Aorta (tissue), 5 donors: ENCODE measurements at regions of chr2 and their contacts with region 1.

Region 1: GRCh38 chr2:179422037-179422643 is 157.5 kb upstream of the SESTD1 start:
- DNase-seq: peak; percentile 77 to 83
- ATAC-seq: peak; percentile 74
- H3K4me3 ChIP-seq: no peak overlapping the region
- H3K27ac ChIP-seq: no peak overlapping the region
- H3K4me1 ChIP-seq: no peaks in the 10 kb centered on the region
- H3K27me3 ChIP-seq: no peaks in the 10 kb centered on the region

Region 2: DNA sequence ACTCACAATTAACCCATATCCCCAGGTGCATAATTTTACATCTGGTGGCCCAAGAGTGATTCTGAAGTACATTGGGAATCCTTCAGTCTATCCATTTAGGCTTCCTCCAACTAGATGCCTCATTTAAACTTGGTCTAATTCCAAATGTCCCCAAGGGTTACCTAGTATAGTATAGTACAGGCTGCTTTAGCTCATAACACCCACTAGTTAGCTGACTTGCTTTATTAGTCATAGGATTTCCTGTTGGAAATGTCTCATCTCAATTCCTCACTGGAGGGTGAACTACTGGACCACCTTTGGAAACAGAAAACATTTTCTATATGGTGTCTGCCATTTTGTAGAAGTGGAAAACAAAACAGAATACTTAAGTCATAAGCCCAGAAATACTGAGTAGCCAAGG is 45.0 kb after region 1 on chr2:
- intact Hi-C with region 1: no loop called
- DNase-seq: no peak
- ATAC-seq: no peak
- H3K4me3 ChIP-seq: no peak overlapping the region
- H3K27ac ChIP-seq: no peak overlapping the region
- H3K4me1 ChIP-seq: no peaks in the 10 kb centered on the region
- H3K27me3 ChIP-seq: no peaks in the 10 kb centered on the region

Region 3: GRCh38 chr2:179495315-179495714 is 73.2 kb after region 1 on chr2:
- intact Hi-C with region 1: no loop called
- DNase-seq: no peak
- ATAC-seq: no peak
- H3K4me3 ChIP-seq: no peak overlapping the region
- H3K27ac ChIP-seq: no peak overlapping the region
- H3K4me1 ChIP-seq: no peaks in the 10 kb centered on the region
- H3K27me3 ChIP-seq: no peaks in the 10 kb centered on the region

Region 4: DNA sequence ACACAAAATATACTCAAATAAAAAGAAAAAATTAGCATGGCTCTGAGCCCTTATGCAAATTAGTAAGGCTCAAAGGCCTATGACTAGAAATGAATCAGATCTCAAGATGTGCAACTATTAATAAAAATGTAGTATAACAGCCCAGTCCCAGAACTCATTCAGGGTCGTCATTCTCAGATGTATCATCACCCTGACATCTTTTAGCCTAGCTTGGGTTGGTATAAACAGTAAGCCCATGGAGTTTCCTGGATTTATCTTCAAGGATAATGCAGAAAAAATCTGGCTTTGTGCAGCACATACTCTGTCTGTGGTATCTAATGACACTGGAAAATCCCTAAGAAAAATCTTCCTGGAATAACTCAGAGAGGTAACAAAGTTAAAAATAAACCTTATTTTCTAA is 200.0 kb after region 1 on chr2:
- intact Hi-C with region 1: no loop called
- DNase-seq: no peak
- ATAC-seq: no peak
- H3K4me3 ChIP-seq: no peak overlapping the region
- H3K27ac ChIP-seq: no peak overlapping the region
- H3K4me1 ChIP-seq: peaks cover 0 to 1% of the 10 kb centered on the region in 2 donors
- H3K27me3 ChIP-seq: no peaks in the 10 kb centered on the region

Region 5: DNA sequence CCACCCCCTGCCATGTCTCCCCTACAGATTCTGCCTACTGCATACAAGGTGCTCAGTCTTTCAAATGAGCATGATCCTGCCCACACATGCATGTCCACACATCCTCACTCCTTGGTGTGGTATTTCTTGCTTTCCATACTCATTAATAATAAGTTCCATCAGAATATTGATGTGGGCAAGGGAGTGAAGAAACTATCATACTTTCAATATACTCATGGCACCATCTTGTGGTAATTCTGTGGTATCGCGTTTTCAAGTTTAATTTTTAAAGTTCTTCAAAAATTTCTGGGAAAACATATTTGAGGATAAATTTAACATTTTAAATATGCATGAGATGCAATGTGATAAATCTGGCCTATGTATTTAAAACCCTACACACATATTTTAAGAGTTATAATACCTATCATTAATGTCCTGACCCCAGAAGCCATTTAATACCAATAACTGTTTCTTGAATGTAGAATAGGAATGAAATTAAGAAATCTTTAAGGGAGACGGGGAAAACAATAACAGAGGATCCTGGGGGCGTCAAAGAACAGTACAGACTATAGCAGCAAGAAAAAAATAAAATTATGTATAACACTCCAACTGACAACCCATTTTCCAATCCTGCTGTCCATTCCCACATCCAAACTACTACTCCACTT is 329.1 kb after region 1 on chr2:
- intact Hi-C with region 1: loop called (anchors 5 to 10 kb)
- DNase-seq: no peak
- ATAC-seq: no peak
- H3K4me3 ChIP-seq: no peak overlapping the region
- H3K27ac ChIP-seq: no peak overlapping the region
- H3K4me1 ChIP-seq: no peaks in the 10 kb centered on the region
- H3K27me3 ChIP-seq: no peaks in the 10 kb centered on the region